OCI-LY7 (cell line): ENCODE measurements at regions of chr2 and their contacts with region 1.

Region 1: DNA sequence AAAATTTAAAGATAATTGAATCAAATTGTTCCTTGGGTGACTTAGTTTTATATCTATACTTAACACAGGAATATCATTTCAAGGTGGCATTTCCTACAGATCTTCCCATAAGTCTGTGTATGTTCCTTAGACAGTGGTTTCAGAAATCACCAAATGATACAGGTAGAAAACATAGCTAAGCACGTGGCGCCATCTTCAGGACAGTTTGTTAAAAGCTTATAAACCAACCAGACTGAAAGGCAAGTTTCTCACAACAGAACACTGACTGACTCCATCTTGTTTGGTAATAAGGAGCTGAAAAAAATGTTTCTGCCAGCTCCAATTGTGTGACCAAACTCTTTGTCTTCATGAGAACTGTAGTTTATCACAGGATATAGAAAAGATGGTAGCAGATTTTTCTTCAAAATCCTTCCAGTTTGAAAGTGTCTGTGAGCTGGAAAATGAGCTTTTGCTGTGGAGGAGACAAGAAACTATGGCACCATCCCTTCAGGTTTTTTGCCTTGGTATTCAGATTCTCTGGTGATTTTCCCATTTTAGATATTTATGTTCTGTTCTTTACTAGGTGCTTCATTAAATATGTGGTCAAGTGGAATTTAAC is 34.8 kb upstream of the NEUROD1 start:
- DNase-seq: peak; percentile 78
- H3K4me3 ChIP-seq: no peak overlapping the region
- H3K27ac ChIP-seq: no peak overlapping the region
- H3K4me1 ChIP-seq: no peaks in the 10 kb centered on the region
- CTCF ChIP-seq: peak; percentile 92

Region 2: DNA sequence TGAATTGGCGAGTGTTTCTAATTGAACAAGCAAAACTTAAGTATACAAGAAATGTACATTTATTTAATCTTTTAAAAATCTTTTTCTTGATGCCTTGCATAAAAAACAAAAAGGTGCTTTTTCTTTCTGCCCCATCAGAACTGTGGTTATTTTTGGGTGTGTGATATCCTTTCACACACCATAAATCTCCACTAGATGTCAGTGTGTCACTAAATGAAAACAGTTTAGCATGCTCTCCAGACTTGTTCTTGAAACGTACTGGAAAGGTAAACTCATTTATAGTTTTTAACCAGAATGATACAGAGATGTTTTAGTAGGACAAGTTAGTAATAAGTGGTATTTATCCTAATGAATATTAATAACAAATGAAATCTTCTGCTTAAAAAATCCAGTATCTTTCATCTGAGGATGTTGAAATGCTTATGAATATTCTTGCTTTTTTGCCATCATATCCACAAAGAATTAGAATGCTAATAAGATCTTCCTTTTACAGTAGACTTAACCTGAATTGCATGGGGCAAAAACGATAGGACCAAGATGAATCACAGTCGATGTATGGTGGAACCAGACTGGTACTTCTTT is 637.9 kb before region 1 on chr2:
- CTCF ChIA-PET with region 1: no interaction called
- POLR2A ChIA-PET with region 1: no interaction called
- intact Hi-C with region 1: loop called (anchors 1 kb)
- DNase-seq: peak; percentile 72
- H3K4me3 ChIP-seq: no peak overlapping the region
- H3K27ac ChIP-seq: no peak overlapping the region
- H3K4me1 ChIP-seq: no peaks in the 10 kb centered on the region
- CTCF ChIP-seq: peak; percentile 94

Region 3: GRCh38 chr2:181104512-181105115 is 610.5 kb before region 1 on chr2:
- CTCF ChIA-PET with region 1: interaction called, 4 read pairs
- POLR2A ChIA-PET with region 1: no interaction called
- intact Hi-C with region 1: loop called (anchors 1 kb)
- DNase-seq: peak; percentile 33
- H3K4me3 ChIP-seq: no peak overlapping the region
- H3K27ac ChIP-seq: no peak overlapping the region
- H3K4me1 ChIP-seq: no peaks in the 10 kb centered on the region
- CTCF ChIP-seq: peak; percentile 90

Region 4: DNA sequence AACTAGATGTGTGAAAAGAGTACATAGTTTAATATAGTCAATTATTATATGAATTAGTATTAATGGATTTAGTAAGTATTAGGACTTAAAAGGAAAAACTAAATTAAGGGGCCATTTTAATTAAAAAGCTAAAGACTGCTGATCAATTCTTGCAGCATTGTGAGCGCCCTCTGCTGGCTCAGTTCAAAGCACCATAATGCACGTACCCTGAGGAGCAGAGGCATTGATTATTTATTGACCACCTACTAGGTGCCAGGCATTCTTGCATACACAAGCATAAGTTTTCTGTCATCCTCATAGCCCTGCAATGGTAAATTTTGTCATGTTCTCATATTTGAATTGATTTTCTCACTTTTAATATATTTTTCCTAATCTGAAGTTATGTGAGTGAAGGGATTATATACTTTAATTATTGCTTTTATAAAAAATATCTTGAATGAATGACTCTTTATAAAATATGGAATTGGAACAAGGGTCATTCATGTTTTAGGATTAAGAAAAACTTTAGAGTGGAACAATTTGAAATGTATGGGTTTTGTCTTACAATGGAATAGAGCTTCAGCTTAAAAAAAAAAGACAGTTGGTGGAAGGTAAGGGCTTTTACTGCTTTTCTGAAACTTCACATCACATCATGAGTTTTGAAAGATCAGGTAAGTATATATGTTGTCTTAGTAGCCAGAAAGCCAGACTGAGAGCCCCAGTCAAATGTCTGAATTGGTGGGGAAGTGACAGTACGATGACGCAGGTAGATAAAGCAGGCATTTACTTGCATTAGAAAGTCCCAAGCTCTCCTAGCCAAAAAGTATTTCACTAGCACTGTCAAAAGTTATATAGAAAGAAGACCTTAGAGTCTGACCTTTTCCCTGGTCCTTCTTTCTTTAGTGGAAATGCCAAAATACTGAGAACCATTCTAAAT is 248.2 kb before region 1 on chr2:
- CTCF ChIA-PET with region 1: no interaction called
- POLR2A ChIA-PET with region 1: no interaction called
- intact Hi-C with region 1: loop called (anchors 5 kb)
- DNase-seq: peak; percentile 80
- H3K4me3 ChIP-seq: no peak overlapping the region
- H3K27ac ChIP-seq: no peak overlapping the region
- H3K4me1 ChIP-seq: peaks cover 13% of the 10 kb centered on the region
- CTCF ChIP-seq: peak; percentile 98

Region 5: DNA sequence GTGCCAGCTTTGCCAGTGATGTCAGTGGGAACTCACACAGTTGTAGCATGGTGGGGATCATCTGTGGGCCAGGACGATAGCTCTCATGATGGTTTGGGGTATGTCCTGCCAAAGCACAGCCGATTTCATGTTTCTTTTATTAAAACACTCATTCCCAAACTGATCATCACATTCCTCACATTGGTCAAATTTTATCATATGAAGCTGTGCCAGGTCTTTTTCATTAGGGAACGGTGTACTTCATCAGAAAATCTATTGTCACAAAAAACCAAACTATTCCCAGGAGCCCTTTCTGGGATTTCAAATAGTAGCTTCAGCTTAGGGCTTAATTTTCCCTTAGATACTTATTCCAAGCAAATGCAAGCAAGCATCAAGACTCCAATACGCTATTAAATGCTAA is 215.9 kb before region 1 on chr2:
- CTCF ChIA-PET with region 1: no interaction called
- POLR2A ChIA-PET with region 1: no interaction called
- intact Hi-C with region 1: no loop called
- DNase-seq: no peak
- H3K4me3 ChIP-seq: no peak overlapping the region
- H3K27ac ChIP-seq: no peak overlapping the region
- H3K4me1 ChIP-seq: no peaks in the 10 kb centered on the region
- CTCF ChIP-seq: no peak

Region 6: DNA sequence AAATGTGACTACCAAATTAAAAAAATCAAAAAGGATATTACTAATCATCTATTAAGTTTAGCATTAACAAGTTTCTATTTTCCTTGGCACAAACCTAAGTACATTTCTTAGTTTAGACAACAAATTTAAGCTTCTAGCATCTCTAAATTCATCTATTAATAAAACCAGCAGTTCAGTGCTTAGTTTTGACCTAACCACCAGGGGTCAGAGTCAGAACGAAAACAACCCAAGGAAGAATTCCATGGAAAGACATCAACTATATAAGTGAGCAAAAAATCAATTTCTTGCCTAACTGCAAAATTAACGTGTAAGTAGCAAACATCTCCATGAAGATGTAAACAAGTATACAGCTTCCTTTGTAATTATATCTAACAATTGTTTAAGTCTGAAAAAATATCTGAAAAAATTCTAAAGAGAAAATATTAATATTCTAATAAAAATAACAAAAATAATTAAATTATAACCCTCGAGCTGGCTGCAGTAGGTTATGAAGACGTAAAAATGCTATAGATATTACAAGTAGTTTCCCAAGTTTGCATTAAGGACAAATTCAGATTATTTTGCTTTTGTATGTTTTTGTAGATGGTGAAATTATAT is 141.9 kb before region 1 on chr2:
- CTCF ChIA-PET with region 1: interaction called, 6 read pairs
- POLR2A ChIA-PET with region 1: interaction called, 9 read pairs
- intact Hi-C with region 1: loop called (anchors 1 kb)
- DNase-seq: peak; percentile 11
- H3K4me3 ChIP-seq: no peak overlapping the region
- H3K27ac ChIP-seq: no peak overlapping the region
- H3K4me1 ChIP-seq: no peaks in the 10 kb centered on the region
- CTCF ChIP-seq: peak; percentile 76

Region 7: DNA sequence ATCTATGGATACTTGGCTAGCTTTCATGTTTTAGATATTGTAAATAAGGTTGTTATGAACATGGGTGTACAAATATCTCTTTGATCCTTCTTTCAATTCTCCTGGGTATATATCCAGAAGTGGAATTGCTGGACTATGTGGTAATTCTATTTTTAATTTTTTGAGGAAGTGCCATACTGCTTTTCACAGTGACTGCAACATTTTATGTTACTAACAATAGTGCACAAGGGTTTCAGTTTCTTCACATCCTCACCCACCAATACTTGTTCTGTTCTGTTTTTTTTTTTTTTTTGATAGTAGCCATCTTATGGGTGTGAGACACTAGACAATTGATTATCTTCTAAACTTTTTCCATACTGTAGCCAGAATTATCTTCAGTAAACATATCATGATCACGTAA is 17.6 kb before region 1 on chr2:
- CTCF ChIA-PET with region 1: no interaction called
- POLR2A ChIA-PET with region 1: no interaction called
- intact Hi-C with region 1: no loop called
- DNase-seq: no peak
- H3K4me3 ChIP-seq: no peak overlapping the region
- H3K27ac ChIP-seq: no peak overlapping the region
- H3K4me1 ChIP-seq: no peaks in the 10 kb centered on the region
- CTCF ChIP-seq: no peak